ENCODE measurements at regions of chr1 and their contacts with region 1.

Region 1: DNA sequence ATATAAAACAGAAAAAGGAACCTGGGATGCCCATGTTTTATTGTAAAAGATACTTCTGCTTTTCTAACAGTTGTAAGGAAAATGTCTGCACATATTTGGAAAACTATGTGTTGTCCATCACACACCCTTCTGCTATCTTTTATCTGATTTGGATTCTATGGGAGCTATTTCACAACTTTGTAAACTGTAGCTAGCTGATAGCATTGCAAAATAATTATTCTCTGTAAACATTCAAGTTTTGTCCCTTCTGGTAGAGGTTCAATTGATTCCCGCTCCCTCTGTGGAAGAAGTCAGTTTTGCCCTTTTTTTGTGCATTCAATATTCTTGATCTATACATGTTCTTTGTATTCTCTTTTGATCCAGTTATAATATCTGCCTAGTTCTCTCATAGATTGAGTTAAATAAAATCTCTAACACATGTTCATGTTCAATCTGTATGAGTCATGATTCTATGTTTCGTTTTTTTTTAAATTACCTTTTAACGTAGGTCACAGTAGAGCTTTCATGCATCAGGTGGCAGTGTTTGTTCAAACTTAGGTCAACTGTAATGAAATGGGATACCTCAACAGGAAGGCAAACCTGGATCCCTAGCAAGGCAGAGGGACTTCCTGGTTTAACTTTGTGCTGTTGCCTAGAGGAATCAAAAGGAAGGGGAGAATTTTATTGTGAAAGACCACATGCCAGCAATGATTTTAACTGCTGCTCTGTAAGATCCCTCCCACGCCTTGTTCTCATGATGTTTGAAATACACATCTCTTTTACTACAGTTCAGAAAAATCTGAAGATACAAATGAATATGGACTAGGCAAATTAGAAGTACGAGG is 26.0 kb upstream of the BCL9 start:
- H3K4me3 ChIP-seq: no peak overlapping the region
- H3K27ac ChIP-seq: no peak overlapping the region
- H3K4me1 ChIP-seq: no peaks in the 10 kb centered on the region
- CTCF ChIP-seq: peak; percentile 74

Region 2: GRCh38 chr1:147452809-147453208 is 62.4 kb before region 1 on chr1:
- CTCF ChIA-PET with region 1: no interaction called
- POLR2A ChIA-PET with region 1: no interaction called
- H3K4me3 ChIP-seq: no peak overlapping the region
- H3K27ac ChIP-seq: no peak overlapping the region
- H3K4me1 ChIP-seq: no peaks in the 10 kb centered on the region
- CTCF ChIP-seq: no peak

Region 3: DNA sequence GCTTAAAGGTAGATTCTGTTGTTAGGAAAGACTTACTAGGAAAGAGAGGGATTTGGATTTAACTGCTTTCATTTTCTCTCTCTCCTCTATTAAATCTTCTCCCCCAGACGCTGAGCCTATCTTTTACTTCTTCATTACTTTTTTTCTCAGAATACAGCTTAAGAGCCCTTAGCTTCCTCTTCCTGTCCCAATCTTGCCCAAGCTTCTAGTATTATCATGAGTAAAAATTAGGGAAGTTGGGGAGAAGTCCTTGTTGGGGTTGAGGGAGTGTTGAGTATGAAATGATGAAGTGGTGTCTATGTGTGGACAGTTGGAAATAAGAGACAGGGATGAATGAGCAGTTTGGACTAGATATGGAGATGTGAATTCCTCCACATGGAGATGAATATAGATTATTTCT is 120.1 kb after region 1 on chr1:
- CTCF ChIA-PET with region 1: interaction called, 32 read pairs
- POLR2A ChIA-PET with region 1: no interaction called
- H3K4me3 ChIP-seq: no peak overlapping the region
- H3K27ac ChIP-seq: no peak overlapping the region
- H3K4me1 ChIP-seq: no peaks in the 10 kb centered on the region
- CTCF ChIP-seq: no peak

Region 4: GRCh38 chr1:147640553-147641165 is 125.4 kb after region 1 on chr1:
- CTCF ChIA-PET with region 1: interaction called, 32 read pairs
- POLR2A ChIA-PET with region 1: no interaction called
- H3K4me3 ChIP-seq: no peak overlapping the region
- H3K27ac ChIP-seq: no peak overlapping the region
- H3K4me1 ChIP-seq: no peaks in the 10 kb centered on the region
- CTCF ChIP-seq: peak; percentile 66

Measured in HEK293 (cell line).